AG04450 (cell line): ENCODE measurements at regions of chr10 and their contacts with region 1.

Region 1: GRCh38 chr10:112955582-112956421 is 5.8 kb downstream of the TCF7L2 start:
- DNase-seq: peak; percentile 83
- H3K4me3 ChIP-seq: peak overlapping the region; percentile 51
- H3K27ac ChIP-seq: peak overlapping the region; percentile 77
- H3K27me3 ChIP-seq: no peaks in the 10 kb centered on the region
- CTCF ChIP-seq: no peak

Region 2: GRCh38 chr10:112875476-112876267 is 80.1 kb before region 1 on chr10:
- CTCF ChIA-PET with region 1: no interaction called
- POLR2A ChIA-PET with region 1: interaction called, 12 read pairs
- DNase-seq: peak; percentile 34
- H3K4me3 ChIP-seq: no peak overlapping the region
- H3K27ac ChIP-seq: peak overlapping the region; percentile 49
- H3K27me3 ChIP-seq: no peaks in the 10 kb centered on the region
- CTCF ChIP-seq: no peak

Region 3: DNA sequence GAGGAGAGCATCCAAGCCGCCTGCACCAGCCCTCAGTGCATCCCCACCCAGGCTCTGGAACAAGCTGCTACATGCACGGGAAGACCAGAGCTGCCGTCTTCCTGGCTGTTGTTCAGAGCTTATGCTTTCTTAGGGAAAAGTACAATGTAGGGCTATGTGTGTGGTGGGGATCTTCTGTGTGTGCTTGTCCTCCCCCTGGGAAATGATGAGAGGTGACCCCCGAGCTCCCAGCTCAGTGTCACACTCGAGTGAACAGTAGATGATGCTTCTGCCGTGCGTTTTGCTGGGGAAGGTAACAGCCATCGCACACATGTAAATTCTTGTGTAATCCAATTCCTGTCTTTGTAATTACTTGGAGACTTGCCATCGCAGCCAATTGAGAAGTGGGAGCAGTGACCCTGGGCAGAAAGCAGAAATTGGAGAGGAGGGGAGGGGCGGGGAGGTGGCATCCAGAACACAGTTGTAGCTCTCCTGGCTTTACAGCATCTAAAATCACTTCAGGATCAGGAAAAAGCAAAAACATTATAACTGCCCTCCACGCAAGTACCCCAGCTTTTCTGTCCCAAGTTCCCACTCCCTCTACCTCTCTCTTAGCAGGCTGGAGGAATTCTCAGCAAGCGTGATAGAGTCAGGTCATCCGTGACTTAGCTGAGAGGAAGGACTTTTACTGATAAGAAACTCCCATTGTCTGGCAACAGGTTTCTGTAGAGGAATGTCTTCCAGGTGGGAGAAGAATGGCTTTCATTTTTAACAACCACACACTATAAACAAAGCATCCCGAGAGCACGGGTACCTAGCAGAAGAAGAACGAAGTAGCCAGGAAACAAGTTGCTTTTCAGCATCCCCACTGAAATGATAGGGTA is 143.9 kb after region 1 on chr10:
- CTCF ChIA-PET with region 1: no interaction called
- POLR2A ChIA-PET with region 1: interaction called, 18 read pairs
- DNase-seq: no peak
- H3K4me3 ChIP-seq: no peak overlapping the region
- H3K27ac ChIP-seq: no peak overlapping the region
- H3K27me3 ChIP-seq: no peaks in the 10 kb centered on the region
- CTCF ChIP-seq: no peak

Region 4: DNA sequence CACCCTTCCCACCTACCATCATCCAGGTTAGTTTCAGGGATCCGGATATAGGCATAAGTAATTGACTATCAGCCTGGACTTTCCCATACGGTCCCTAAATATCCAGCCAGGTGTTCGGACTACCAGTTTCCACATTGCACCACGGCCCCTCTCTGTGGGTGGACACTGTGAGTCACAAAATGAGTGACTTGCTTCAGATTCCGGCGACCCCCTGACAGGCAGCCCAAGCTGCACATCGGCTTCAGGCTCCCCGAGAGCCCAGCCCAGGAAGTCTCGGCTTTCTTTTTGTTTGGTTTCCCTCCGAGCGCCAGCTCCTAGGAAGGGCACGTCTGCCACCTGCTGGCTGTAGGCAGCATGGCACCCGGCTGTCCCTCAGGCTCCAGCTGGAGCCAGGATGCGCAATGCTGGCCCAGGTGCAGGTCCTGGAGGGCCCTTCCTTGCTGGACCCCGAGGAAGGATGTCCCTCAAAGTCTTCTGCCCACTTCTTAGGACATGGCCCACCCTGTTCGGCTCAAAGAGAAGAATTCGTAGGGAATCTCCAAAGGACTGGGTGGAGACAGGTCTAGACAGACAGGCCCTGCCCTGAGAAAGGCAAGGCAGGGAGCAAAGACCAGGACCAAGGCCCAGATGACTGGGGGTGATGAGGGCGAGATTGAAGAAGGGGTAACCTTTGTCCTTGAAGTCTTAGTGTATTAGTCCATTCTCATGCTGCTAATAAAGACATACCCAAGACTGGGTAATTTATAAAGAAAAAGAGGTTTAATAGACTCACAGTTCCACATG is 607.7 kb after region 1 on chr10:
- CTCF ChIA-PET with region 1: interaction called, 11 read pairs
- POLR2A ChIA-PET with region 1: no interaction called
- DNase-seq: peak; percentile 15
- H3K4me3 ChIP-seq: peak overlapping the region; percentile 60
- H3K27ac ChIP-seq: no peak overlapping the region
- H3K27me3 ChIP-seq: peaks cover 6% of the 10 kb centered on the region
- CTCF ChIP-seq: peak; percentile 96